ENCODE measurements at regions of chr7 and their contacts with region 1.

Region 1: DNA sequence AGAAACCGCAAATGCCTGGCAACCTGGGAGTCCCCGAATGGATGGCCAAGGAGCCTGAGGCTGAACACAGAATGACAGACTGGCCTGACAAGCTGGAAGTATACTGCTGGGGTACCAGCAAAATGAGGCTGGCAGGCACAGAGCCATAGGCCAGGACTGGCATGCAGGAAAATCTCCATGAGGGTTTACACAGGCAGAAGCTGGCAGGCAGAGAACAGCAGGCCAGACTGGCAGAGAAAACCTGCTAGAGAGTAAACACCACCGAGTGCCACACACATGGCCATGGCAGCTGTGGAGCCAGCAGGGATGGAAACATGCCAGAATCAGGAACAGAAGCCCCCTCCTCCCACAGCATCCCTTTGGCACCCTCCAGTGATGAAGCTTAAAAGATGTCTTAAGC is 63.4 kb downstream of the CRPPA start:
- DNase-seq: no peak
- ATAC-seq: peak; percentile 27 to 57

Region 2: DNA sequence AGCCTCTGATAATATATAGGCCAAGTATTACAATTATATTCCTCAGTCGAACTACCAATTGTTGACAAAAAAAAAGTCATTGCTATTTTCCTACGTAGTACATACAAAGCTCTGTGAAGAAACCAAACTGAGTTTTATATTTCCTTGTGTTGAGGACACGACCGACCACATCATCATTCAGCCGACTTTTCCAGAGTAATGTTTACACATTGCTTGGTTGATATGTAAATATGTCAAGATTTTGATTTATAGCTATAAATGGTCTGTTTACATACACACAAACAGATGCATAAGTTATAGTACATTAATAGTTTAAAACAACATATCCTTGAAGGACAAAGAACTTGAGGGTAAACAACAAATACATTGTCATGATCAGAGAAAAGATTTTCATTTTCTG is 58.1 kb before region 1 on chr7:
- intact Hi-C with region 1: loop called in 1 of 2 experiments (anchors 10 kb)
- DNase-seq: no peak
- ATAC-seq: no peak

Measured in left cardiac atrium (tissue), 4 donors.